ENCODE measurements at regions of chrX and their contacts with region 1.

Region 1: DNA sequence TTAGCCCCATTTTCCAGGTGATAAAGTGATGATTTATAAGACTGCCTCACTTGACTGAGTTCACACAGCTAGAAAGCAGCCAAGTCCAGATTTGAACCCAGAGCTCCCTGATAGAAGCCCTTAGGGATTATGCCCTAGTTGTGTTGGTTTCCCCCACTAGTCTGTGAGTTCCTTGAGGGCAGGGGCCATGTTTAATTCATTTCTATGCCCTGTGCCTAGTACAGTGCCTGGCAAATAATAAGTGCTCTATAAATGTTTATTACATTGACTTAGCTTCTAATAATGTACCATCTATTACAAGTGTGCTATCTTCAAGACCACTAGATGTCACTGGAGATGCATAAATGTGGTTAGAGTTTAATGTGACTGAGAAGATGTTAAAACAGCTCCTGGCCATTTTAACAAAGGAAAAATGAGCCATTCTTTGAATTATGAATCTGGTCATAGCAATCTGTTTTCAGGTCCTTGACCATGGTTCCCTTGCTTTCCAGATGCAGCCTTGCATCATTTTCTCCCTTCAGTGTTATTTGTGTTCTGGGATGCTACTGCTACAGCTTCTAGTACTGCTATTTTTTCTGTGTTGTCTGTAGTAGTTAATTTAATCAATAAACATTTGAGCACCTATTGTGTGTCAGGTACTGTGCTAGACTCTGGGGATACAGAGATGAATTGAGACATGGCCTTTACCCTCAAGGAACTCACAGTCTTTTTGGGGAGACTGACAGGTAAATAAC is 43.2 kb downstream of the SLC9A6 start:
- DNase-seq: no peak
- ATAC-seq: peak; percentile 44

Region 2: DNA sequence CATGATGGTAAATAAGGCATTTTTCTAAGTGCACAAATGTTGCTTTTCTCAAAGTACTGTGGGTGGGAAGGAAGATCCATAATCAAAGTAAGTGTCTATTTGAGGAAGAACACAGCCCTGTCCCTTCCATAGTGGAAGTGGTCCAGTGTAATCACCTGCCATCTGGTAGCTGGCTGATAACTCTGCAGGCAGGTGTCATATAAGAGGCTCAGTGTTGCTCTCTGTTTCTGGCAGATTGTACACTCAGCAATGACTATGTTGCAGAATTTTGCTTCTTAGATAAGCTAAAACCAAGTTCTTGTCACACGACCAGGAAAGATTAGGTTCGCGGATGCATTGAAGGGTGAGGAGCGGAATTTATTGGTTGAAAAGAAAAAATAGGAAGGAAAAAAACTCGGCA is 114.0 kb before region 1 on chrX:
- intact Hi-C with region 1: no loop called
- DNase-seq: no peak
- ATAC-seq: no peak

Region 3: DNA sequence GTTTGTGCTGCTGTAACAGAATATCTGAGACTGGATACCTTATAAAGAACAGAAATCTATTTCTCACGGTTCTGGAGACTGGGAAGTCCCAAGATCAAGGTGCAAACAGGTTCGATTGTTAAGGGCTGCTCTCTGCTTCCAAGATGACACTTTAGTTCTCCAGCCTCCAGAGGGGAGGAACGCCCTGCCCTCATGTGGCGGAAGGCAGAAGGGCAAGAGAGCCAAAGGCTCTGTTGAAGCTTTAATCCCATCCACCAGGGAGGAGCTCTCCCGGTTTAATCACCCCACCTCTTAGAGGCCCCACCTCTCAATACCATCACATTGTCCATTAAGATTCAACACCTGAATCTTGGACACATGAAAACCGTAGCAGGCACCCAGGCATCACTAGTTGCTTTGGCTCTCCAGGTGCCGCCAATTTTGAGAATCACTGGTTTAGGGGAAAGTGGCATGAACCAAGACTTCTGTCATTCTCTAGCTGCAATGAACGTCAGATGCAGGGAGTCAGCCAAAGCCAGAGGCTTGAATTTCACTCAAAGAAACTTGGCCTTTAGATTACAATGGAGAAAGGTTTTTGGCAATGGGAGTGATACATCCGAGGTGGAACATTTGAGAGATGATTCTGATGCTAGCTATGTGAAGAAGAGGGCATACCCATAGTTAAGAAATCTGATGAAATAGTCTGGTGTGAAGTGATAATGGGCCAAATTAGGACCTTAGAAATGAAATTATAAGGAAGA is 134.6 kb after region 1 on chrX:
- intact Hi-C with region 1: loop called (anchors 5 kb)
- DNase-seq: peak; percentile 68
- ATAC-seq: peak; percentile 67

Region 4: GRCh38 chrX:136272332-136272731 is 243.9 kb after region 1 on chrX:
- intact Hi-C with region 1: loop called (anchors 5 kb)
- DNase-seq: no peak
- ATAC-seq: no peak

Measured in left ventricle myocardium superior (tissue), 1 donor.